PC-3 (cell line): ENCODE measurements at regions of chr1 and their contacts with region 1.

Region 1: DNA sequence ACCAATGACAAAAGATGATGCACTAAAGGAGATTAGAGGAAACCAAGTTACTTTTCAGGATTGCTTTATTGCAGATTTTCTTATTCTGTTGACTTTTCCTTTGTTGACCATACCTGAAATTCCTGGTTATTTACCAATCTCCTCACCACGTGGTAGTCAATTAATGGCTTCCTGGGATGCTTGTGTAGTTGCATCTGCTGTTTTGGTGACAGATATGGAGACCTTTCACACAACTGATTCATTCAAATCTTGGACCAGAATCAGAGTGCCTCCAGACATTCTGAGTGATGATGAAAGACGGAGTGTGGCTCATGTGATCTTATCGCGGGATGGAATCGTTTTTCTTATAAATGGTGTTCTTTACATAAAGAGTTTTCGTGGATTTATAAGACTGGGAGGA is 91.3 kb downstream of the CATSPERE start:
- DNase-seq: peak; percentile 98
- ATAC-seq: peak; percentile 88
- H3K4me3 ChIP-seq: no peak overlapping the region
- H3K27ac ChIP-seq: no peak overlapping the region
- H3K4me1 ChIP-seq: peaks cover 8% of the 10 kb centered on the region; the same call in 1 of the 2 replicates
- H3K27me3 ChIP-seq: no peaks in the 10 kb centered on the region
- CTCF ChIP-seq: no peak

Region 2: GRCh38 chr1:243903895-243904294 is 648.4 kb before region 1 on chr1:
- CTCF ChIA-PET with region 1: no interaction called
- POLR2A ChIA-PET with region 1: no interaction called
- intact Hi-C with region 1: no loop called
- DNase-seq: peak; percentile 48
- ATAC-seq: no peak
- H3K4me3 ChIP-seq: no peak overlapping the region
- H3K27ac ChIP-seq: no peak overlapping the region
- H3K4me1 ChIP-seq: peaks cover 11% of the 10 kb centered on the region
- H3K27me3 ChIP-seq: no peaks in the 10 kb centered on the region
- CTCF ChIP-seq: no peak

Region 3: DNA sequence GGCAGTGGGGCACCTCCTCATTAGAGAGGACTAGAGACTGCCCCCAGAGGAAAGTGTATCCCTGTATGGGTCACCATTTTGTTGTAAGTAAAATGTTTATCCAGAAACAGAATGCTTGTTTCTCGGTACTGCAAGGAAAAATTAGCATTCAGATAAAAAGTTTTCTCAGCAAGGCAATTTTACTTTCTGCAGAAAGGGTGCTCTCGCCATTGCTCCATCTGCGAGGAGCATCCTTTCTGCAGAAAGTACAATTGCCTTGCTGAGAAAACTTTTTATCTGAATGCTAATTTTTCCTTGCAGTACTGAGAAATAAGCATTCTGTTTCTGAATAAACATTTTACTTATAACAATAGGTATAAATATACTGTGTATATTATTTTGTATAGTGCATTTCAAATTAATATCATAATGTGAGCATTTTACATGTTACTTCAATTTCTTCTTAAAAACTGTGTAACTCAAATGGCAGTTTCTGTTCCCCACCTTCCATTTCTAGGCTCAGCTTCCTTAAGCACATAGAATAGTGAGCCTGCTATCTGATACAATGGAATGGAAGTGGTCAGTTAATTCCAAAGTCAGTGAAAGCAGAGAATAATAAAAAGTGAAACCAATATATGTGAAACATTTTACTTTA is 24.0 kb after region 1 on chr1:
- CTCF ChIA-PET with region 1: no interaction called
- POLR2A ChIA-PET with region 1: no interaction called
- intact Hi-C with region 1: no loop called
- DNase-seq: peak; percentile 21
- ATAC-seq: no peak
- H3K4me3 ChIP-seq: no peak overlapping the region
- H3K27ac ChIP-seq: no peak overlapping the region
- H3K4me1 ChIP-seq: no peaks in the 10 kb centered on the region
- H3K27me3 ChIP-seq: no peaks in the 10 kb centered on the region
- CTCF ChIP-seq: no peak

Region 4: GRCh38 chr1:244599937-244600350 is 47.6 kb after region 1 on chr1:
- CTCF ChIA-PET with region 1: no interaction called
- POLR2A ChIA-PET with region 1: no interaction called
- intact Hi-C with region 1: loop called (anchors 1 kb)
- DNase-seq: peak; percentile 98
- ATAC-seq: peak; percentile 95
- H3K4me3 ChIP-seq: peak overlapping the region; percentile 65
- H3K27ac ChIP-seq: peak overlapping the region; percentile 55
- H3K4me1 ChIP-seq: peaks cover 13% of the 10 kb centered on the region
- H3K27me3 ChIP-seq: no peaks in the 10 kb centered on the region
- CTCF ChIP-seq: no peak

Region 5: DNA sequence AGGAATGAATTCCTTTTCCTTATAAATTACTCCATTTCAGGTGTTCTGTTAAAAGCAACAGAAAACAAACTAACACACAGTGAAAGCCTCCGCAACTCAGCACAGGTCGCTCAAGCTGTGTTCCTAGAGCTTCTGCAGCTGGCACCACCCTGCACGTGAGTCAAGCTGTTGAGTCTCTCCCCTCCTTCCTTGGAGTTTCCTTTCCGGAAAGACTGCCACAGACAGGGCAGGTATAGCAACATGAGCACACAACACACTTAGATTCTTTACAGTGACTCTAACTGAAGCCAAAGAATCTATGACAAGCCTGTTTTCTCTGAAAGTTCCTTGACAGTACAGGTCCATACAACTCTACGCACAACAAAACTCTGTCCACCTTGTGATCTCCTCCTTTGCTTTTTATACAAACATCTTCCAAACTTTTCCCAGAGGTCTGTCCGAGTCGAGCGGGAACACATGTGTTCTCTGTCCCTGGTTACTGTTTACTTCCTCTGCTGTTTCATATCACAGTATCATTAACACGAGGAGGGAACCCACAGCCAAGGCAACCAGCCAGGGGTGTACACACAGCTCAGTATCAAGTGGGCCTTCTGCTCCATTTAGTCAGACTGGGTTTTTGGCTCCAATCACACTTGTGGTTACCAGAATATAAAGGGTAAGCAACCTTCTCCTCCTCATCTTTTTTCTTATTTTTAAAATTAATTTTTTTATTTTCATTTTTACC is 61.9 kb after region 1 on chr1:
- CTCF ChIA-PET with region 1: no interaction called
- POLR2A ChIA-PET with region 1: no interaction called
- intact Hi-C with region 1: no loop called
- DNase-seq: no peak
- ATAC-seq: peak; percentile 64
- H3K4me3 ChIP-seq: no peak overlapping the region
- H3K27ac ChIP-seq: no peak overlapping the region
- H3K4me1 ChIP-seq: no peaks in the 10 kb centered on the region
- H3K27me3 ChIP-seq: no peaks in the 10 kb centered on the region
- CTCF ChIP-seq: no peak